HEK293 (cell line): ENCODE measurements at regions of chr12 and their contacts with region 1.

Region 1: GRCh38 chr12:54579696-54580333 is 8.6 kb downstream of the PPP1R1A start:
- H3K4me3 ChIP-seq: no peak overlapping the region
- H3K27ac ChIP-seq: no peak overlapping the region
- H3K4me1 ChIP-seq: no peaks in the 10 kb centered on the region; the same call in 1 of the 2 replicates
- CTCF ChIP-seq: peak; percentile 97

Region 2: GRCh38 chr12:54368709-54369583 is 210.9 kb before region 1 on chr12:
- CTCF ChIA-PET with region 1: no interaction called
- POLR2A ChIA-PET with region 1: no interaction called
- H3K4me3 ChIP-seq: no peak overlapping the region
- H3K27ac ChIP-seq: no peak overlapping the region
- H3K4me1 ChIP-seq: peaks cover 10% of the 10 kb centered on the region
- CTCF ChIP-seq: peak; percentile 79

Region 3: GRCh38 chr12:54549774-54550451 is 29.9 kb before region 1 on chr12:
- CTCF ChIA-PET with region 1: interaction called, 15 read pairs
- POLR2A ChIA-PET with region 1: no interaction called
- H3K4me3 ChIP-seq: peak overlapping the region; percentile 59
- H3K27ac ChIP-seq: peak overlapping the region; percentile 30; the same call in 1 of the 2 replicates
- H3K4me1 ChIP-seq: 0 out of 2 replicates have a peak, but pooled peaks cover 3% of the 10 kb centered on the region
- CTCF ChIP-seq: no peak

Region 4: GRCh38 chr12:54560374-54560858 is 19.4 kb before region 1 on chr12:
- CTCF ChIA-PET with region 1: interaction called, 27 read pairs
- POLR2A ChIA-PET with region 1: no interaction called
- H3K4me3 ChIP-seq: no peak overlapping the region
- H3K27ac ChIP-seq: no peak overlapping the region
- H3K4me1 ChIP-seq: peaks cover 13% of the 10 kb centered on the region
- CTCF ChIP-seq: no peak

Region 5: GRCh38 chr12:54565310-54565985 is 14.4 kb before region 1 on chr12:
- CTCF ChIA-PET with region 1: interaction called, 27 read pairs
- POLR2A ChIA-PET with region 1: no interaction called
- H3K4me3 ChIP-seq: no peak overlapping the region
- H3K27ac ChIP-seq: no peak overlapping the region
- H3K4me1 ChIP-seq: peaks cover 5% of the 10 kb centered on the region; the same call in 1 of the 2 replicates
- CTCF ChIP-seq: no peak

Region 6: GRCh38 chr12:54596526-54596946 is 16.7 kb after region 1 on chr12:
- CTCF ChIA-PET with region 1: interaction called, 64 read pairs
- POLR2A ChIA-PET with region 1: no interaction called
- H3K4me3 ChIP-seq: no peak overlapping the region
- H3K27ac ChIP-seq: no peak overlapping the region
- H3K4me1 ChIP-seq: no peaks in the 10 kb centered on the region
- CTCF ChIP-seq: peak; percentile 49; the same call in 1 of the 2 replicates

Region 7: GRCh38 chr12:54603173-54603814 is 23.5 kb after region 1 on chr12:
- CTCF ChIA-PET with region 1: interaction called, 64 read pairs
- POLR2A ChIA-PET with region 1: no interaction called
- H3K4me3 ChIP-seq: no peak overlapping the region
- H3K27ac ChIP-seq: no peak overlapping the region
- H3K4me1 ChIP-seq: no peaks in the 10 kb centered on the region
- CTCF ChIP-seq: peak; percentile 73

Region 8: GRCh38 chr12:54701940-54702592 is 122.3 kb after region 1 on chr12:
- CTCF ChIA-PET with region 1: interaction called, 10 read pairs
- POLR2A ChIA-PET with region 1: no interaction called
- H3K4me3 ChIP-seq: no peak overlapping the region
- H3K27ac ChIP-seq: no peak overlapping the region
- H3K4me1 ChIP-seq: no peaks in the 10 kb centered on the region
- CTCF ChIP-seq: no peak

Region 9: GRCh38 chr12:54784115-54784514 is 204.3 kb after region 1 on chr12:
- CTCF ChIA-PET with region 1: no interaction called
- POLR2A ChIA-PET with region 1: no interaction called
- H3K4me3 ChIP-seq: no peak overlapping the region
- H3K27ac ChIP-seq: no peak overlapping the region
- H3K4me1 ChIP-seq: no peaks in the 10 kb centered on the region
- CTCF ChIP-seq: no peak